ENCODE measurements at regions of chr22 and their contacts with region 1.

Region 1: GRCh38 chr22:37953437-37954179 is at the starts of genes C22orf23 and POLR2F:
- DNase-seq: peak; percentile 98
- ATAC-seq: peak; percentile 98
- H3K4me3 Mint-ChIP-seq: peak within 1 kb of the TSS; percentile 86
- H3K27ac Mint-ChIP-seq: peak within 1 kb of the TSS; percentile 91
- H3K4me1 Mint-ChIP-seq: peaks cover 26% of the 10 kb centered on the region
- H3K27me3 Mint-ChIP-seq: peaks cover 11% of the 10 kb centered on the region
- total RNA-seq, gene C22orf23: 0.16 TPM in 1 of 2 experiments, not detected in the other
- total RNA-seq, gene POLR2F: 70.5 to 77.8 TPM

Region 2: DNA sequence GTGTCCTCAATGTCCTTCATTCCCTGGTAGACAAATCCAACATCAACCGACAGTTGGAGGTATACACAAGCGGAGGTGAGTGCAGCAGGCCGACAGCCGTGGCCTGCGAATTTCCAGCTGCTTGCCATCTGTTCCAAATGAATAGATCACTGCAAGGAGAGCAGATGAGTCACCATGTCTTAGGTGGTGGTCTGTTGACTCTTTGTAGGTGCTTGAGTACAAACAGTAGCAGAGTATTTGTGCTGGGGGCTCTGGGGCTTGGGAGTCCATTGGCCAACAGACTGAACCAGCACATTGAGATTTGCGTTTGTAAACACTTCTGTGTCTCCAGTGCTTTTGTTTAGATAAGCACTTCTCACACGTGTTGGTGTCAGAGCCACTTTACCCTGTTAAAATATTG is 83.3 kb before region 1 on chr22:
- CTCF ChIA-PET with region 1: no interaction called
- POLR2A ChIA-PET with region 1: no interaction called
- intact Hi-C with region 1: no loop called
- DNase-seq: no peak
- ATAC-seq: no peak
- H3K4me3 Mint-ChIP-seq: no peak overlapping the region
- H3K27ac Mint-ChIP-seq: no peak overlapping the region
- H3K4me1 Mint-ChIP-seq: no peaks in the 10 kb centered on the region
- H3K27me3 Mint-ChIP-seq: no peaks in the 10 kb centered on the region

Region 3: DNA sequence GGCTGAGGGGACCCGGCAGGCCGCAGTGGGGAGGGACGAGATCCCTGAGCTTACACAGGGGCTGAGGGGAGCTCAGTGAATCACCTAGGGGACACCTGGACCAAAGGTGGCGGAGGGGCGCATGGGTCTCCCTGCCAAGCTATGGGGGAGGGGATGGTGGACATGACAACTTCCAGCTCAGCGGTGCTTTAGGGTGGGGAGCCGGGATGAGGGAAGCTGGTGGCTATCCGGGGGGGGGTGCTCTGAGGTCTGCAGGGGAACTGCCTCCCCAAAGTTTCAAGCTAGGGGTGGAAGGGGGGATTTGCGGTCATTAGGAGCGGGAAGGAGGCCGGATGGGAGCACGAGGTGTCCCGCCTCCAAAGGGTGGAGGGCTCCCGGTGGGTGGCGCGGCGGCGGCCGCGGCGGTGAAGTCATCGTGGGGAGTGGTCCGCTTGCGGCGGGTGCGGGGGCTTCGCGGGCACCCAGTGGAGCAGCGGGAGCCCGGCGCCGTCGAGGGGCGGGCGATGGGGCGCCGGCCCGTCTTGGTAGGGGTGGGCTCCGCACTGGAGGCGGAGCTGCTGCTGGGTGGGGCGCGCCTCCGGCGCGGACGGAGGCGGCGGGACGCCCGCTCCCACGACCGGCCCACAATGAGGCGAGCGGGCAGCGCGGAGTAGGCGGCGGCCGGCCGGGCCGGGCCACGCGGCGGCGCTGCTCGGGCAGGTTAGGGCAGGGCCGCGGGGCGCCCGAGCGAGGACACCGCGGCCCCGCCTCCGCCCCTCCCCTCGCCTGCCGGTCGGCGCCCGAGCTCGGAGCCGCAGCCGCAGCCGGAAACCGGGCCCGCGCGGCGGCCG is 47.9 kb before region 1 on chr22 and contains the start of gene MICALL1:
- CTCF ChIA-PET with region 1: no interaction called
- POLR2A ChIA-PET with region 1: interaction called, 5 read pairs
- intact Hi-C with region 1: loop called (anchors 1 to 5 kb)
- DNase-seq: peak; percentile 80
- ATAC-seq: peak; percentile 86
- H3K4me3 Mint-ChIP-seq: peak within 1 kb of the TSS; percentile 72
- H3K27ac Mint-ChIP-seq: peak within 1 kb of the TSS; percentile 79
- H3K4me1 Mint-ChIP-seq: peaks cover 21% of the 10 kb centered on the region
- H3K27me3 Mint-ChIP-seq: no peaks in the 10 kb centered on the region
- total RNA-seq, gene MICALL1: 11.2 to 11.8 TPM

Region 4: DNA sequence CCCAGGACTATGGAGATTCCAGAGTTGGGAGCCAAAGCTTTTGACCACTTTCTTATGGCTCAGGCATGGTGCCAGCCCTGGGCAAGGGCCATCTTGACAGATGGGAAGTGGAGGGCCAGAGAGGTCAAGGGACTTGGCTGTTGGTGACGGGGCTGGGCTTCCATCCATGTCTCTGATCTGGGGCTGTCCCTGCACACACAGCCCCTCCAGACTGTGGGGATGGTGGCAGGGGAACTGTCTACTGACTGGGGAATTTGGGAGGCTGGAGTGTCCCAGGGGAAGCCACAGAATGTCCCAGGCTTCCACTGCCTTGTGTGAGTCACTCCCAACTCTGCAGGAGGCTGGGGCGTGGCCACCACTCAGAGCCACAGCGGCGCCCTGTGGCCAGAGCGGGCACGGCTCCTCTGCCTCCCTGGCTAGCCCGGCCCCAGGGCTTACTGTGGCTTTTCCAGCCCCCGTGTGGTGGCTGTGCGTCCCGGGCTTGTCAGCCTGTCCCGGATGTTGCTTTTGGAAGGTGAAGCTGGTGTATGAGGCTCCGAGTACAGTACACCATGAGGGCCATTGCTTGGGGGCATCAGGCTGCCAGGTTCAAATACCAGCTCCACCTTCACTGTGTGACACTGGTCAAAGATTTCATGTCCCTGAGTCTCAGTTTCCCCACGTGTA is 19.8 kb before region 1 on chr22:
- CTCF ChIA-PET with region 1: interaction called, 6 read pairs
- POLR2A ChIA-PET with region 1: no interaction called
- intact Hi-C with region 1: loop called (anchors 1 to 2 kb)
- DNase-seq: peak; percentile 94
- ATAC-seq: peak; percentile 100
- H3K4me3 Mint-ChIP-seq: no peak overlapping the region
- H3K27ac Mint-ChIP-seq: no peak overlapping the region
- H3K4me1 Mint-ChIP-seq: peaks cover 11% of the 10 kb centered on the region
- H3K27me3 Mint-ChIP-seq: no peaks in the 10 kb centered on the region

Region 5: DNA sequence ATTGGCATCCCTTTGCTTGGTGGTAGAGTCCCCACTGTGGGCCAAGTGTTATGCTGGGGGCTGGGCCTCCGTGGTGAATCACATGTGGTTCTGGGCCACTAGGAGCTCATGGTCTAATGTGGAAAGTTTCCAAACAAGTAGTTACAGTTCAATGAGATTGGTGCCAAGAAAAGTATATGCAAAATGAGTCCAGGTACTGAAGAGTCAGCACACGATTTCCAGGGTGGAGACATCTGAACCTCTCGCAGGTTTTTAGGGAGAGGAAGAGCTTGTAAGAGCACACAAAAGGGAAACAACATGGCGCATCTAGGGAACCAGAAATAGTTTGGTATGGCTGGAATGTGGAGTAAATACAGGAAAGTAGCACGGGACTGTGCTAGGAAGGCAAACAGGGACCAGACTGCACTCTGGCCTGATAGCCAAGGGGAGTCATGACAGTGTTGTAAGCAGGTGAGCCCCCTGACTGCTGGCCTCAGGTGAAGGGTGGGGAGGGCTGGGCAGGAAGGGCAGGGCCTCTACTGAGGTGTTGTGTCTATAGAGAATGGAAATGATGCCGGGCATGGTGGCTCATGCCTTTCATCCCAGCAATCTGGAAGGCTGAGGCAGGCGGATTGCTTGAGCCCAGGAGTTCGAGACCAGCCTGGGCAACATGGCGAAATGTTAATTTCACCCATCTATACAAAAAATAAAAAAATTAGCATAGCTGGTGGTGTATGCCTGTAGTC is 12.5 kb after region 1 on chr22:
- CTCF ChIA-PET with region 1: interaction called, 26 read pairs
- POLR2A ChIA-PET with region 1: interaction called, 5 read pairs
- intact Hi-C with region 1: no loop called
- DNase-seq: no peak
- ATAC-seq: no peak
- H3K4me3 Mint-ChIP-seq: no peak overlapping the region
- H3K27ac Mint-ChIP-seq: no peak overlapping the region
- H3K4me1 Mint-ChIP-seq: no peaks in the 10 kb centered on the region
- H3K27me3 Mint-ChIP-seq: no peaks in the 10 kb centered on the region

Region 6: GRCh38 chr22:38056969-38057891 is 103.6 kb after region 1 on chr22 and contains the start of gene PICK1:
- CTCF ChIA-PET with region 1: no interaction called
- POLR2A ChIA-PET with region 1: no interaction called
- intact Hi-C with region 1: loop called in 1 of 2 experiments (anchors 1 kb)
- DNase-seq: peak; percentile 92
- ATAC-seq: peak; percentile 93
- H3K4me3 Mint-ChIP-seq: peak within 1 kb of the TSS; percentile 88
- H3K27ac Mint-ChIP-seq: peak within 1 kb of the TSS; percentile 98
- H3K4me1 Mint-ChIP-seq: peaks cover 15% of the 10 kb centered on the region
- H3K27me3 Mint-ChIP-seq: no peaks in the 10 kb centered on the region
- total RNA-seq, gene PICK1: 14.9 to 17.2 TPM

Region 7: DNA sequence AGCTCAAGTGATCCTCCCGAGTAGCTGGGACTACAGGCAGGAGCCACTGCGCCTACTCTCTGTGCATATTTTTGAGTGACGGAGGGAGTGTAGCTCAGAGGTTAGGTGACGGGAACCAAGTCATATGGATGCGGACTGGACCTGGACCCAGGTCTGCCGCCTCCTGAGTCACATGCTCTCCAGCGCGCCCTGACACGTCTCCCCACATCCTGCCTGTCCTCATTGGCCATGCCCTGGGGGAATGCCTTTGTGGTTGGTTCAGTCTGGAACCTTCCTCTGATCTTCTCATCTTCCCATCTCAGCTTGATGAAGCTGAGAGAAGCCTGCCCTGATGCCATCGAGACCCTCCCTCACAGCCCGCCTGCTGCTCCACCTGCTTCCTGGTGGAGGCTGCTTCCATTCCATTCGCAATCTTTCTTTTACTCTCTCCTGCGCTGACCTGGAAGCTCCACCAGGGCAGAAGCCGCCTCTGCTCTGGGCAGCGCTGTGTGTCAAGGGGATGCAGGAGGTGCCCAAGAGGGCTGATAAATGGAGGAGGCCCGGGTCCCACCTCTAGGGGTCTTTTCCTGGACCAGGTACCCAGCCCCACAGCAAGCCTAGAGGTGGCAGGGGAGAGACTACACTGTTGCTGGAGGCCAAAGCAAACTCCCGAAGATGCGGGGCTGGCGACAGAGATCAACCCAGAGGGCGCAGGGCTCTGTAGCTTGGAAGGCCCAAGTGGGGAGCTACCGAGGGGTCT is 170.8 kb after region 1 on chr22:
- CTCF ChIA-PET with region 1: no interaction called
- POLR2A ChIA-PET with region 1: no interaction called
- intact Hi-C with region 1: no loop called
- DNase-seq: no peak
- ATAC-seq: no peak
- H3K4me3 Mint-ChIP-seq: no peak overlapping the region
- H3K27ac Mint-ChIP-seq: peak overlapping the region; percentile 43
- H3K4me1 Mint-ChIP-seq: no peaks in the 10 kb centered on the region
- H3K27me3 Mint-ChIP-seq: no peaks in the 10 kb centered on the region